Sigmoid colon (tissue), 7 donors: ENCODE measurements at regions of chr18 and their contacts with region 1.

Region 1: GRCh38 chr18:50374753-50375391 is at the start of gene SKA1:
- DNase-seq: peak; percentile 95
- H3K4me3 ChIP-seq: peak within 1 kb of the TSS; percentile 30 to 54 (median 50)
- H3K27ac ChIP-seq: peak within 1 kb of the TSS; percentile 72 to 76 (median 74)
- H3K4me1 ChIP-seq: peaks cover 0 to 11% (median 9%) of the 10 kb centered on the region in 4 donors
- H3K27me3 ChIP-seq: no peaks in the 10 kb centered on the region
- CTCF ChIP-seq: no peak
- EP300 ChIP-seq: no peak
- POLR2A ChIP-seq: peak in 1 of 2 donors; percentile 66
- total RNA-seq, gene SKA1: 0.68 TPM in 1 of 4 donors, not detected in the others

Region 2: DNA sequence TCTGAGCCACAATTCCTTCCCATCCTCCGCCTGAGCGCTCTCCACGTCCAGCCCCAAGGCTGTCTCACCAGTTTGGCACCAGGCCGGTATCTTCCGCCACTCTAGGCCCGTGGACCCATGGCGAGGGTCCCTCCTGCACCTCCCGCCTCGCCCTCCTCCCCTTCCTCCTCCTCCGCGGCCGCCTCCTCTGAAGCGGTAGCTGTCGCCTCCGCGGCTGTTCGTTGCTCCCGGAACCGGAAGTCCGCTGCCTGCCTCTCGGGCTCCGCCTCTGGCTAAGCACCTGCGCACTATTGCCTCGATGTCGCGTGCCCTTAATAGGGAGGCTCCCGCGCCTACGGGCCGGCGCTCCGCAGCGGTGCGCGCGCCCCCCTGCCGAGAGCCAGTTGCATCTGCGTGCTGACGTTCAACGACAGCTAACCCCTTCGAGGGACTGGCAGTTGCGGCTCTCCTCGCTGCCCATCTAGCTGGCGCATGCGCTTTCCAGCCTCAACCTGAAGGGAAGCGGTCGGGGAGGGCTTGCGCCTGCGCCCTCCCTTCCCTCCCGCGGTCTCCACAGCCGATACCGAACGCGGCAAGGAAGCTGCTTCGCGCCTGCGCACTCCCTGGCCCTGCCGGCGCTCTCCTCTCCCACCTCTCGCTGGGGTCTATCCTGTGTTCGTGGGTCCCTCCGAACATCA is 93.4 kb before region 1 on chr18 and contains the start of gene MBD1:
- intact Hi-C with region 1: loop called (anchors 2 kb)
- DNase-seq: peak; percentile 99
- H3K4me3 ChIP-seq: peak within 1 kb of the TSS; percentile 74 to 99 (median 92)
- H3K27ac ChIP-seq: peak within 1 kb of the TSS; percentile 93 to 96 (median 94)
- H3K4me1 ChIP-seq: peaks cover 0 to 34% (median 29%) of the 10 kb centered on the region in 4 donors
- H3K27me3 ChIP-seq: no peaks in the 10 kb centered on the region
- CTCF ChIP-seq: peak in 2 of 4 experiments; percentile 12 to 20
- EP300 ChIP-seq: no peak
- POLR2A ChIP-seq: peak; percentile 91
- total RNA-seq, gene MBD1: 58.9 to 93.6 (median 75.5) TPM

Region 3: GRCh38 chr18:50307738-50308470 is 67.0 kb before region 1 on chr18:
- intact Hi-C with region 1: loop called (anchors 5 kb)
- DNase-seq: peak; percentile 94
- H3K4me3 ChIP-seq: peak overlapping the region; percentile 26 to 52 (median 50)
- H3K27ac ChIP-seq: peak overlapping the region in 3 of 4 donors; percentile 33 to 45 (median 35)
- H3K4me1 ChIP-seq: peaks cover 0 to 11% (median 10%) of the 10 kb centered on the region in 4 donors
- H3K27me3 ChIP-seq: peaks cover 0 to 8% (median 0%) of the 10 kb centered on the region in 3 donors
- CTCF ChIP-seq: no peak
- EP300 ChIP-seq: no peak
- POLR2A ChIP-seq: no peak